AG04449 (cell line): ENCODE measurements at regions of chr1 and their contacts with region 1.

Region 1: GRCh38 chr1:177355595-177355994 is 184.8 kb downstream of the BRINP2 start:
- DNase-seq: no peak
- H3K4me3 ChIP-seq: no peak overlapping the region
- CTCF ChIP-seq: peak; percentile 49

Region 2: DNA sequence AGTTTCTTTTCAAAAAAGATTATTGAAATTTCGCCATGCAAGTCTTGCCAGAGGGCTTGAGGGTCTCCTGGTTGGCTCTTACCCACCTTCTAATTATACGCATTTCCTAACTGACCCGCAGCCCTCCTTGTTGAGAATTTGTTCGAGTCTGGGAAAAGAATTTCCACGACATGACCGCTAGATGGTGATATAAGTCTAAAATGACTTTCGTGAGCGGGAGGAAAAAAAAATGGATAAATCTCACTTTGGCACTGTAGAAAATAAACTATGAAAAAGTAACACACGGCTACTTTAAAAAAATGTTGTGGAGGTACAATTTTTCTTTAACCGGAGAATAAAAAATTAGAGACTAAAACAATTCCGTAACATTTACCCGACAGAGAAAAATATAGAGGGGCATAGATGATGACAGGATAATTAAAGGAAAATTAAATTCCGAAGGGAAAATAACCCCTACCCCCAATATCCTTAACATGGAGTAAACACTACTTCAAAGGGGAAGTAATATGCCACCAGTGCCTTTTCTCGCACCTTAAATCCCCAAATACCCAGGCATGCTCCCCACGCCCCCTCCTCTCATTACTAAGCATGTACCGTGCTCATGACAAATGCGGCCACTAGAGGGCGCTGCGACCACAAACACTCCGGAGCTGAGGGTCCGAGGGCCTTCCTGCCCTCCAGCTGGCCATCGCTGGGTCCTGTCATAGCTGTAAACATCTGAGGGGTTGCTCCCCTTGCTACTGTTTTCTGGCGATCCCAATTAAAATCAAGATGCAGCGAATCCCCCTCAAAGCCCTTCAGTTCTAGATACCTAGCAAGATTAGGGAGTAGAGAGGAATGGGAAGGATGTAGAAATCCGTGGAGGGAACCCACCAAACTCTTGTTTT is 458.0 kb before region 1 on chr1:
- CTCF ChIA-PET with region 1: interaction called, 59 read pairs
- POLR2A ChIA-PET with region 1: no interaction called
- DNase-seq: peak; percentile 7
- H3K4me3 ChIP-seq: no peak overlapping the region
- CTCF ChIP-seq: peak; percentile 89

Region 3: GRCh38 chr1:177278626-177279390 is 76.8 kb before region 1 on chr1:
- CTCF ChIA-PET with region 1: no interaction called
- POLR2A ChIA-PET with region 1: no interaction called
- DNase-seq: no peak
- H3K4me3 ChIP-seq: no peak overlapping the region
- CTCF ChIP-seq: no peak